ENCODE measurements at regions of chr11 and their contacts with region 1.

Region 1: GRCh38 chr11:2151500-2152257 is 9.3 kb downstream of the INS start:
- DNase-seq: peak; percentile 65 to 86 (median 82)
- H3K4me3 ChIP-seq: no peak overlapping the region
- H3K27ac ChIP-seq: no peak overlapping the region
- H3K4me1 ChIP-seq: peaks cover 2% of the 10 kb centered on the region
- H3K27me3 ChIP-seq: no peaks in the 10 kb centered on the region
- CTCF ChIP-seq: peak; percentile 68 to 89 (median 89)
- EP300 ChIP-seq: no peak
- POLR2A ChIP-seq: no peak

Region 2: DNA sequence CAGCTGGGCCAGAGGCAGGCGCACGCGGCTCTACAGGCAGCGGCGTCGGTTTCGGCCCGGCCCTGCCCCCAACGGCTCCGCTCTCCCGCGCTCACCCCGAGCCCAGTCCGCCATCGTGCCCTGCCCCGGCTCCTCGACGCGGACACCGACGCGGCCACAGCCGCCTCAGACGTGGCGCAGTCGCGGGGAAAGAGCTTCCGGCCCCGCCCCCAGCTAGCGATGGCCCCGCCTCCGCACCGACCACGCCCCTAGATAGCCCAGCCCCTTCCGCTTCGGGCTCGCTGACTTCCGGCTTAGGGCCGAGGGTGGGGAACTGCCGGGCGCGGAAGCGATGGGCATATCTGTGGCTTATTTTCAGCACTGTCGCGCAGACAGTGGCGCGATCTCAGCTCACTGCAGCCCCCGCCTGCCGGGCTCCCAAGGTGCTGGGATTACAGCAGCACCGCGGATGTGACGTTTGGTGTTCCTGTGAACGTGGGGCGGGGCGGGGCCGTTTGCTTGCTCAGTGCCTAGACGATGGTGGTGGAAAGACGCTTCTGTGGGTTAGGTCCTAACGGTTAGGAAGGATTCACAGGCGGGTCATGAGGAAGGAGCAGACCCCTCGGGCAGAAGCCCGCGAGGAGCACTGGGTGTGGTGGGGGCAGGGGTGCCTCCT is 1944.3 kb before region 1 on chr11 and contains the starts of genes BET1L and RIC8A:
- intact Hi-C with region 1: no loop called
- DNase-seq: peak; percentile 95 to 98 (median 96)
- H3K4me3 ChIP-seq: peak within 1 kb of the TSS; percentile 78
- H3K27ac ChIP-seq: peak within 1 kb of the TSS; percentile 75 to 98
- H3K4me1 ChIP-seq: peaks cover 19% of the 10 kb centered on the region
- H3K27me3 ChIP-seq: no peaks in the 10 kb centered on the region
- CTCF ChIP-seq: no peak
- EP300 ChIP-seq: peak; percentile 21
- POLR2A ChIP-seq: peak; percentile 91
- total RNA-seq, gene BET1L: 24.6 to 76.6 (median 65.5) TPM
- total RNA-seq, gene RIC8A: 53.4 to 119 (median 87.4) TPM

Region 3: DNA sequence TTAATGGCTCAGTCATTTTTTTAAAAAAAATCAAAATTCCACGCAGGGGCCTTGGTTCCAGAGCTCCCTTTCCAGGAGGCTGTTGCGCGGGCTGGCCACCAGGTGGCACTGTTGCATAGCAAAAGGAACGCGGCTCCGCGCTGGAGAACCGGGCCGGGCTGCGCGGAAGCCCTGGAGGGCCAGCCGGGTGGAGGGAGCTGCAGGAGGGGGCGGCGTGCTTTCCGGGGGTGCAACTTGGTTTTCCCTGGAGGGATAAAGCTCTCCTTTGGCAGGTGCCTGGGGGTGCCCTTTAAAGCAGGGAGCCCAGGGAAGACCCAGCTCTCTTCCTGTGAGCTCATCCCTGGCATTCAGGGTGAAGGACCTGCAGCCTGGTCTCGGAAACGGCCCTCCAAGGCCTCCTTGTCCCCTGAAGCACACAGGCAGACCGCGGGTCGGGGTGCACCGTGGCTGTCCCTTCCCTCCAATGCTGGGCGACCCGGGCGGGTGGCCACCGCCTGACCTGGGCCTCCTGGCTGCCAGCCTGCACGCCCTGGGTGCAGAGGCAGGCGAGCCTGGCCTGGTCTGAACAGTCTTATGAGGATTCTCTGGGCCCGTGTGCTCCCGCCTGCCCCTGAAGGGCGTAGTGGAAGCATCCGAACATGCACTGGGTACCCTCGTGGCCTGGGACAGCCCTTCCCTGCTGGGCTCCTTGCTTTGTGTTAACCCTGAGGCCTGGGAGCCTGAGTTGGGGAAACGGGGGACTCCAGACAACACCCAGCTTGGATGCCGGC is 498.7 kb before region 1 on chr11:
- intact Hi-C with region 1: loop called in 1 of 4 experiments (anchors 10 kb)
- DNase-seq: peak; percentile 62 to 85 (median 77)
- H3K4me3 ChIP-seq: no peak overlapping the region
- H3K27ac ChIP-seq: no peak overlapping the region
- H3K4me1 ChIP-seq: no peaks in the 10 kb centered on the region
- H3K27me3 ChIP-seq: no peaks in the 10 kb centered on the region
- CTCF ChIP-seq: peak; percentile 81 to 91 (median 84)
- EP300 ChIP-seq: no peak
- POLR2A ChIP-seq: no peak

Region 4: GRCh38 chr11:1837171-1838076 is 314.3 kb before region 1 on chr11:
- intact Hi-C with region 1: loop called in 3 of 4 experiments (anchors 2 to 5 kb)
- DNase-seq: peak; percentile 69 to 88 (median 78)
- H3K4me3 ChIP-seq: no peak overlapping the region
- H3K27ac ChIP-seq: no peak overlapping the region
- H3K4me1 ChIP-seq: peaks cover 1% of the 10 kb centered on the region
- H3K27me3 ChIP-seq: no peaks in the 10 kb centered on the region
- CTCF ChIP-seq: peak; percentile 54 to 90 (median 84)
- EP300 ChIP-seq: no peak
- POLR2A ChIP-seq: no peak

Region 5: GRCh38 chr11:1889224-1890120 is 262.2 kb before region 1 on chr11:
- intact Hi-C with region 1: loop called in 2 of 4 experiments (anchors 5 kb)
- DNase-seq: peak in 2 of 5 donors; percentile 11 to 35
- H3K4me3 ChIP-seq: no peak overlapping the region
- H3K27ac ChIP-seq: no peak overlapping the region
- H3K4me1 ChIP-seq: no peaks in the 10 kb centered on the region
- H3K27me3 ChIP-seq: no peaks in the 10 kb centered on the region
- CTCF ChIP-seq: no peak
- EP300 ChIP-seq: no peak
- POLR2A ChIP-seq: no peak

Region 6: DNA sequence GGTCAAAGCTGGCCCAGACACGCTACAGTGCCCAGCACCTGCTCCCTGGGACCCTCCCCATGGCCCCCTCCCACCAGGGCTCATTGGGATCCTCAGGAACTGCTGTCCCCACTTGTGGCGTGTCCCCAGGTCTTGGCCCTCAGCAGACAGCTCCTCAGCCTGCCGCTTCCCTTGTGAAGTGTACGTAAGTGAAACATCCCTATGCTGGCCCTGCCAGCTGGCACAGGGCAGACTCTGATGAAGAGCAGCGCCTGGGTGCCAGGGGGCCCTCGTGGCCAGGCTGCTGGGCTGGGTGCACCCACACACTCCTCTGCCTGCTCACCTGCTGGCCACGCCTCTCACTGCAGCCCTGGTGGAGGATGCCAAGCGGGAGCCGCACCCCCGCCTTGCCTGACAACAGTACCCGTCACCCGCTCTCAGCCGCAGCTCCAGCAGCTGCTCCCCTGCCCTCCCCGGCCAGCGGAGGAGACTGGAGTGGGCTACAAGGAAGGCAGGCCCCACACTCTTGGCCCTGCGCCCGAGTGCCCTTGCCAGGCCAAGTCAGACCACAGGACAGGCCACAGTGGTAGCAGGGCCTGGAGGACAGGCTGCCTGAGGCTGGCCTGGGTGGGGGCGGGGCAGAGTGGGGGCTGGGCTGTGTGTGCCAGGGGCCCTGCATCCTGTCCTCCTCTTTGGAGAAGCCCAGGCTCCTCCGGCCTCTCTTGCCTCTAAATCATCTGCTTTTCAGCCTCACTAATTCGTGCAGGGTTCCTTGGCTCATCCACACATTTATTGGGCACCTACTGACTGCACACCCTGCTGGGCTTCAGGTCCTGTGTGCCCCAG is 52.0 kb before region 1 on chr11:
- intact Hi-C with region 1: loop called in 1 of 4 experiments (anchors 5 kb)
- DNase-seq: peak in 3 of 5 donors; percentile 26 to 49 (median 49)
- H3K4me3 ChIP-seq: no peak overlapping the region
- H3K27ac ChIP-seq: no peak overlapping the region
- H3K4me1 ChIP-seq: peaks cover 18% of the 10 kb centered on the region
- H3K27me3 ChIP-seq: no peaks in the 10 kb centered on the region
- CTCF ChIP-seq: no peak
- EP300 ChIP-seq: no peak
- POLR2A ChIP-seq: no peak